ENCODE measurements at regions of chr1 and their contacts with region 1.

Region 1: DNA sequence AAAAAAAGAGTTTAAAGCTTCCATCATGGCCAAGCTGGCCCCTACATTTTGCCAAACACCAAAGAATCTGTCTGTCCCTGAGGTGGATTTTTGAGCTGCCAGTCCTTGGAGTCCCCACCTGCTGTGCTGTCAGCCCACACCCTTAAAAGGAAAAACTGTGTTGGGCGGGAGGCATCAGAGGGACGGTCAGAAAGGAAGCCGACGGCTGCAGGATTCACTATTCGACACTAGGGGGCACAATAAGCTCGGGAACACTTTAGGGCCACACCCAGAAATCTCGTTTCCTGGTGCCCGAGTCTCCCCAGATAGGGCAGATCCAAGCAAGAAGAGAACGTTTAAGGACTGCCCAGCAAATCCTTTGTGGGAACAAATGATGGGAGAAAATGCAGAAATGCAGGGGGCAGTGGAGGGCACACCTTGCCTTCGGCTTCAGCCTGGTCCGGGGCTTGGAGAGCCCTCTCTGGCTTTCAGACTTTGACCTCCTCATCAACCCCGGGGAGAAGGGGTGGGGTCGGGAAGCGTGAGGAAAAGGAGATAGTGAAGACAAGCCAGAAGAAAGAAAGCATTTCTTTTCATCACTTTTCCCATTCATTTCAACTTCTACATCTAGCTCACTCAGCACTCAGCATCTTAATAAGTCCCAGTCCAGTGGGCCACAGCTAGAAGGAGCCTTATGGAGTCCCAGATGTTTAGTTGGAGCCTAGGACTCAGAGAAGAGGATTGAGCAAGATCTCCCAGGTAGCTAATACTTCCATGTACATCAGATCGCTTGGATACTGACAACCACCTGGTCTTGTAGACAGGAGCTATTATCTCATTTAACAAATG is 5.0 kb upstream of the CTTNBP2NL start:
- DNase-seq: peak; percentile 84
- ATAC-seq: peak; percentile 86

Region 2: DNA sequence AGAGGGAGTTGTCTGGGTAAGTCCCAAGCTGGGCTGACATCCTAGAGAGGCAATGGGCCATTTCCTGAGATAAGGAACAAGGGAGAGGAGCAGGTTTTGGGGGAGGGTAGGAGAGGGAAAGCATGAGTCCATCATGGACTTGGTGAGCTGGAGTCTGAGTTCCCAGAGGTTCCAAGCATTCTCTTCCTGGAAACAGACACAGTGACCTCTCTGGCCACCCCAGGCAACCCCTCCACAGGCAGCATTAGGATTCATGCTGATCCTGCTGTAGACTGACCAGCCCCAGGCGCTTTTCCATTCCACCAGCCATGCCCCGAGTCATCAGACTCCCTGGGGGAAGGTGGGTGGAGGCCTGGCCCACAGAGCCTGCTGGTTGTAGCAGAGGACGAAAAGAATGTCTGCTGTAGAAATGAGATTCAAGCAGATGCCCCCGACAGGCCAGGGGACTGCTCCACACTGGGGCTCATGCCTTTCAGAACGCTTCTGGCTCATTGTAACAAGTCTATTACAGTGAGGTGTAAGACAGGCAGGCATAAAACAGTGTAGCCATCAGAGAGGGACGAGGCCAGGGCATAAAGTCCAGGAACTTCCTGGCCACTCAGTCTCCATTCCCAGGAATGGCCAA is 453.8 kb before region 1 on chr1:
- intact Hi-C with region 1: no loop called
- DNase-seq: no peak
- ATAC-seq: peak; percentile 18

Region 3: GRCh38 chr1:112133487-112133886 is 257.5 kb before region 1 on chr1:
- intact Hi-C with region 1: no loop called
- DNase-seq: no peak
- ATAC-seq: no peak

Region 4: GRCh38 chr1:112375701-112376100 is 15.3 kb before region 1 on chr1:
- intact Hi-C with region 1: no loop called
- DNase-seq: no peak
- ATAC-seq: no peak

Region 5: GRCh38 chr1:112466078-112466660 is 75.2 kb after region 1 on chr1:
- intact Hi-C with region 1: loop called (anchors 2 kb)
- DNase-seq: peak; percentile 97
- ATAC-seq: peak; percentile 93

Region 6: GRCh38 chr1:112706908-112707663 is 316.1 kb after region 1 on chr1 and contains the start of gene RHOC:
- intact Hi-C with region 1: loop called (anchors 10 kb)
- DNase-seq: peak; percentile 92
- ATAC-seq: peak; percentile 87
- total RNA-seq, gene RHOC: 96.0 TPM

Measured in left ventricle myocardium superior (tissue), 1 donor.